H1 (cell line): ENCODE measurements at regions of chr6 and their contacts with region 1.

Region 1: DNA sequence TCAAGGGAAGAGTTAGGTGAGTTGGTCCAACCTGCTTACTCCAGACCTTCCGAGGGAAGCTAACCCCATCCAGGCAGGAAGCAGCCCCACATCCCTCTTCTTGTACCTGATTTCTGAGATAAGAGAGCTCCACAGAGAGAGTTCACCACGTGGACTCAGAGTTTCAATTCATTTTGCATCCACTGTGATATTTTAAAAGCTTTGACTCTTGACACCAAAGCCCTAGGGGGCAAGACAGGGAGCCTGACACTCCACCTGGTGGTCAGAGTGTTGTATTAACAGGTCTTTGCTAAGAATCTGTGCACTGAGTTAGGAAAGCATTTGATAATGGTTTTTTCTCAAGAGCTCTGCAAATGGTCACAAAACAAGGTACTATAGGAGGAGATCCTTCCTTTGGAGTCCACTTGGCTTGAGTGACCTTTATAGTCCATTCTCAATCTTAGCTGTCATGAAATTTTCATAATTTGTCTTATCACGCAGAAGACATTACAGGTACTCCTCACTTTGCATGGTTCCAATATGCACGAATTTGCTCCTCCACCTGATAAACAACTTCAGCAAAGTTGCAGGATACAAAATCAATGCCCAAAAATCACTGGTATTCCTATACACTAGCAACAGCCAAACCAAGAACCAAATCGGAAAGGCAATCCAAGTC is 56.2 kb upstream of the RIPOR2 start:
- DNase-seq: no peak
- H3K4me3 ChIP-seq: no peak overlapping the region
- H3K27ac ChIP-seq: no peak overlapping the region
- H3K4me1 ChIP-seq: peaks cover 0 to 7% (median 6%) of the 10 kb centered on the region in 4 experiments; a peak in 5 of 7 replicates
- H3K27me3 ChIP-seq: no peaks in the 10 kb centered on the region
- CTCF ChIP-seq: peak; percentile 38 to 84 (median 77)
- EP300 ChIP-seq: no peak
- POLR2A ChIP-seq: no peak
- RAD21 ChIP-seq: peak; percentile 76 to 89

Region 2: GRCh38 chr6:24827162-24827561 is 164.8 kb before region 1 on chr6:
- CTCF ChIA-PET with region 1: interaction called, 10 read pairs
- POLR2A ChIA-PET with region 1: no interaction called
- DNase-seq: no peak
- H3K4me3 ChIP-seq: no peak overlapping the region
- H3K27ac ChIP-seq: no peak overlapping the region; the same call in 1 of the 2 replicates
- H3K4me1 ChIP-seq: 0 out of 7 replicates have a peak, but pooled peaks cover 0 to 2% (median 0%) of the 10 kb centered on the region in 4 experiments
- H3K27me3 ChIP-seq: no peaks in the 10 kb centered on the region
- CTCF ChIP-seq: no peak
- EP300 ChIP-seq: no peak
- POLR2A ChIP-seq: no peak
- RAD21 ChIP-seq: peak; percentile 23 to 27; a peak in 3 of 4 replicates

Region 3: GRCh38 chr6:24876499-24877465 is 115.2 kb before region 1 on chr6:
- CTCF ChIA-PET with region 1: interaction called, 20 read pairs
- POLR2A ChIA-PET with region 1: no interaction called
- DNase-seq: peak in 1 of 2 experiments; percentile 66
- H3K4me3 ChIP-seq: peak overlapping the region in 3 of 4 experiments; percentile 15 to 48 (median 21); a peak in 5 of 8 replicates
- H3K27ac ChIP-seq: peak overlapping the region; percentile 78
- H3K4me1 ChIP-seq: peaks cover 0 to 31% (median 16%) of the 10 kb centered on the region in 4 experiments; a peak in 6 of 7 replicates
- H3K27me3 ChIP-seq: no peaks in the 10 kb centered on the region
- CTCF ChIP-seq: no peak
- EP300 ChIP-seq: 0 out of 3 replicates have a peak, but pooled peaks of 1 of the 2 experiments have one; percentile 51
- POLR2A ChIP-seq: peak; percentile 66 to 83
- RAD21 ChIP-seq: peak in 1 of 2 experiments; percentile 34; a peak in 3 of 4 replicates

Region 4: GRCh38 chr6:24899997-24900325 is 92.0 kb before region 1 on chr6:
- CTCF ChIA-PET with region 1: interaction called, 21 read pairs
- POLR2A ChIA-PET with region 1: no interaction called
- DNase-seq: no peak
- H3K4me3 ChIP-seq: no peak overlapping the region
- H3K27ac ChIP-seq: no peak overlapping the region
- H3K4me1 ChIP-seq: peaks cover 4 to 6% (median 5%) of the 10 kb centered on the region in 4 experiments; a peak in 4 of 7 replicates
- H3K27me3 ChIP-seq: no peaks in the 10 kb centered on the region
- CTCF ChIP-seq: no peak
- EP300 ChIP-seq: no peak
- POLR2A ChIP-seq: no peak
- RAD21 ChIP-seq: no peak

Region 5: DNA sequence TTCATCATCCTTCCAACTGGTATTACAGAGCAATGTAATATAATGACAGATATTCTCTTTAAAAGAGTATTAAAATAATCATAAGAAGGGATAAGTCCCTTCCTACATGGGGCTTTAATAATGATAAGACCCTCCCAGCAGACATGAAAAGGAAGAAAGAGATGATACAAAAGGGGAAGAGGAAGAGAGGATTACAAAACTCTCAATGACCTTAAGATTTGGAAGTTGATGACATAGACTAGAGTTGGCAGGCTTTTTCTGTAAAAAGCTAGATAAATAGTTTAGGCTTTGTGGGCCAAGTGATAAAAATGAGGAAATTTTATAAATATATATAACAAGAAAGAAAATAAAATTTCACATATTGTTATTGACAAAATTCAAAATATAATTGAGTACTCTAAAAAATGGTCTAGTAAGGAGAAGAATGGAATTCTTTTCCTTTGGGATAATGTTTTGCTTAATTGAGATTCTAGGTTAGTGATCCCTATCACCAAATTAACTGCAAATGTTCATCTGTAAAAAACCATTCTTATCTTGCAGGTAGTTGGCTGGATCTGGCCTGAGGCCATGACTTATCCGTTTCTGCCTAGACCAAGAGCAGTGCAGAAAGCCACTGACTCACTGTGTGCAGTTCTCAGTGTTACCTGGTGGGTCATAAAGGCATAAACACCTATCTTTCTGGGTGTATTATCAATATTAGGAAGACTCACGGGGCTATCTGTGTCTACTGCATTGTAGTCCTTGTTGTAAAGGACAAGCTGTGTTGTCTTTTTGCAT is 67.2 kb before region 1 on chr6:
- CTCF ChIA-PET with region 1: interaction called, 31 read pairs
- POLR2A ChIA-PET with region 1: no interaction called
- DNase-seq: no peak
- H3K4me3 ChIP-seq: no peak overlapping the region
- H3K27ac ChIP-seq: no peak overlapping the region
- H3K4me1 ChIP-seq: peaks cover 3 to 21% (median 17%) of the 10 kb centered on the region in 4 experiments
- H3K27me3 ChIP-seq: no peaks in the 10 kb centered on the region
- CTCF ChIP-seq: no peak
- EP300 ChIP-seq: no peak
- POLR2A ChIP-seq: no peak
- RAD21 ChIP-seq: no peak

Region 6: DNA sequence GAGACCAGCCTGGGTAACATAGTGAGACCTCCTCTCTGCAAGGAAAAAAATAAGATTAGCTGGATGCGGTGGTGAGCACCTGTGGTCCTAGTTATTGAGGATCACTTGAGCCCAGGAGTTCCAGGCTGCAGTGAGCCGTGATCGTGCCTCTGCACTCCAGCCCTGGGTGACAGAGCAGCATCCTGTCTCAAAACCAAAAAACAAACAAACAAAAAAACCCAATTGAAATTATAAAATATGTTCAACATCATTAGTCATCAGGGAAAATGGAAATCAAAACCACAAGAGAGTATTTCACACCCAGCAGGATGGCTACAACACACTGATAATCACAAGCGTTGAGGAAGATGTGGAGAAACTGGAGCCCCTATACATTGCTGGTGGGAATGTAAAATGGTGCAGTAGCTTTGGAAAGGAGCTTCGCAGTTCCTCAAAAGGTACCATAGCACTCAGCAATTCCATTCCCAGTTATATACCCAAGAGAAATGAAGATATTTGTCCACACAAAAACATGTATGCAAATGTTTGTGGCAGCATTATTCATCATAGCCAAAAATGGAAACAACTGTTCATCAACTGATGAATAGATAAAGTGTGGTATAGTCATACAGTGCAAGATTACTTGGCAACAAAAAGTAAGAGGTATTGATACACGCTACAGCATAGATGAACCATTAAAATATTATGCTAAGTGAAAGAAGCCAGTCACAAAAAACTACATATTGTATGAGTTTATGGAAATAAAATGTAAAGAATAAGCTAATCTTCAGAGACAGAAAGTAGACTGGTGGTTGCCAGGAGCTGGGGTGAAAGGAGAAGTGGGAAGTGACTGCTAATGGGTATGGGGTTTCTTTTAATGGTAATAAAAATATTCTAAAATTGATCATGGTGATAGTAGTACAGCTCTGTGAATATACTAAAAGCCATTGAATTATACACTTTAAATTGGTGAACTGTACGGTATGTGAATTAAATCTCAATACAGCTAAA is 17.5 kb before region 1 on chr6:
- CTCF ChIA-PET with region 1: interaction called, 101 read pairs
- POLR2A ChIA-PET with region 1: interaction called, 29 read pairs
- DNase-seq: no peak
- H3K4me3 ChIP-seq: no peak overlapping the region
- H3K27ac ChIP-seq: no peak overlapping the region
- H3K4me1 ChIP-seq: peaks cover 0 to 5% (median 5%) of the 10 kb centered on the region in 4 experiments; a peak in 2 of 7 replicates
- H3K27me3 ChIP-seq: no peaks in the 10 kb centered on the region
- CTCF ChIP-seq: no peak
- EP300 ChIP-seq: no peak
- POLR2A ChIP-seq: no peak
- RAD21 ChIP-seq: no peak

Region 7: DNA sequence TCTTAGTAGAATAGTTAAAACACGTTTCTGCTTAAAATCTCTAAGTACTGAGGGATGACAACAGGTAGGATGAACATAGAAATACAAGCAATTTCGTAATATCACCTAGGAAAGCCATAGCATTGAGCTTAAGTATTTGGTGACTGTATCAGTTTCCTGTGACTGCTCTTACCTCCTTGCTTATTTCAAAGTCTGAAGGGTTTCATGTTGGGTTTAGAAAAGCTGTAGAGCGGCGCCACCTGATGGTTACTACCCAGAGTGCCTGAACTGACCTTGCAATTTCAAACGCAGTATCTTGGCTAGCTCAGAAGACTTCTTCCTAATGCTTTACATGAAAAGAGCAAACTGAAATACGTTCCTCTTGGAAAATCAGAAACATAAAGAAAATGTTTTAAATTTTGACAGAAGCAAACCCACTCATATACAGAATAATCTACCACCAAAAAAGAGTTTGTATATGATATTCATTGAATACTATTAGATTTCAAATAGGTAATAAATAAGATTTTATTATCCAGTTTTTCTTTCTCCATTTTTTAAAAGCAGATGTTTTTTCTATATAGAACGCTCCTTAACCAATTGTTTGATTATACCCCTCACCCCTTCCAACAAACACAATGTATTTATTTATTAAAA is 26.1 kb after region 1 on chr6:
- CTCF ChIA-PET with region 1: interaction called, 15 read pairs
- POLR2A ChIA-PET with region 1: no interaction called
- DNase-seq: peak; percentile 66 to 75
- H3K4me3 ChIP-seq: no peak overlapping the region
- H3K27ac ChIP-seq: no peak overlapping the region
- H3K4me1 ChIP-seq: peaks cover 0 to 10% (median 0%) of the 10 kb centered on the region in 4 experiments; a peak in 4 of 7 replicates
- H3K27me3 ChIP-seq: no peaks in the 10 kb centered on the region
- CTCF ChIP-seq: peak; percentile 43 to 94 (median 91)
- EP300 ChIP-seq: no peak
- POLR2A ChIP-seq: no peak
- RAD21 ChIP-seq: peak; percentile 100